HEK293 (cell line): ENCODE measurements at regions of chr4 and their contacts with region 1.

Region 1: GRCh38 chr4:73434311-73434710 is 1.7 kb upstream of the AFP start:
- H3K4me3 ChIP-seq: no peak overlapping the region
- H3K27ac ChIP-seq: no peak overlapping the region
- H3K4me1 ChIP-seq: no peaks in the 10 kb centered on the region
- CTCF ChIP-seq: no peak

Region 2: DNA sequence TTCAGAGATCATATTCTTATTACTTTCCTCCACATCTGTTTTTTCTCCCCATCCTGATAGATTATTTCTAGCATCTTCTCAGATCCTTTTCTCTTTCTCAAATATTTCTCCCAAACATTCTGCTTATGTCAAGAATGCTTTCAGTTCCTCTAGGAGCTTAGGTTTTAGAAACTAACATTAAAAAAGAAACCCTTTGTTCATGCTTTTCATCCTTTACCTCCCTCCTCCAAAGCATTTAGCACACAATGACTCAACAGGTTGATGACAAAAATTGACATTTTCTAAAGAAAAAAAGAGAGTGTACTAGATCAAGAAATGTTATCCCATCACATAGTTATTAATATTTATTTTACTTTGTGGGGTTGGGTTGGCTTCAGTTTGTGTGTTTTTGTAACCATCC is 46.8 kb before region 1 on chr4:
- CTCF ChIA-PET with region 1: no interaction called
- POLR2A ChIA-PET with region 1: no interaction called
- H3K4me3 ChIP-seq: no peak overlapping the region
- H3K27ac ChIP-seq: no peak overlapping the region
- H3K4me1 ChIP-seq: no peaks in the 10 kb centered on the region
- CTCF ChIP-seq: no peak

Region 3: DNA sequence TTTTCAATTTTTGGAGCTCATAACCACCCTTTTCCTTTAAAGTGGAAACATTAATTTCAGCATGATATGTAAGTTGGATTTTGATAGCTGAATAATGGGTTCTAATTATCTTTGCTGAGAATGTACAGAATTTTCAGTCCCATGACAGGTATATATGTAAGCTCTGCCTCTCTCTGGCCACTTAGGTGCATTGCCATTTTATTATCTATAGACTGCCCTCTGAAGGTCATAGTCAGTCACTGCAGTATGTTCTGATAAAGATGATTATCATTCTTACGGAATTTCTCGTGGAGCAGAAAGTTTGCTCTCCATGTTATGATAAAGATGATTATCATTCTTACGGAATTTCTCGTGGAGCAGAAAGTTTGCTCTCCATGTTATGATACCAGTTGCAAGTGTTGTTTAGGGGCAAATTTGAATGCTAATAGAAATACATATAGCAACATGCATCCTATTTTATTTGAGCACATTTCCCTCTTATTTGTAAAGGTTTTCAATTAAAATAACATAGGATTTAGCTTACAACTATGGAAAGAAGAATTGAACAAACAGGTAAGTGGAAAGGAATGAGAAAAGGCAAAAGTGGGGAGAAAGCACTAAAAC is 12.1 kb after region 1 on chr4:
- CTCF ChIA-PET with region 1: interaction called, 20 read pairs
- POLR2A ChIA-PET with region 1: no interaction called
- H3K4me3 ChIP-seq: no peak overlapping the region
- H3K27ac ChIP-seq: no peak overlapping the region
- H3K4me1 ChIP-seq: no peaks in the 10 kb centered on the region
- CTCF ChIP-seq: 0 out of 2 replicates have a peak, but pooled peaks have one; percentile 16